OCI-LY7 (cell line): ENCODE measurements at regions of chr9 and their contacts with region 1.

Region 1: GRCh38 chr9:7053903-7054302 is 296.1 kb downstream of the KDM4C start:
- DNase-seq: no peak
- H3K4me3 ChIP-seq: no peak overlapping the region
- H3K27ac ChIP-seq: no peak overlapping the region
- H3K4me1 ChIP-seq: no peaks in the 10 kb centered on the region
- CTCF ChIP-seq: no peak

Region 2: GRCh38 chr9:6833518-6834192 is 220.2 kb before region 1 on chr9:
- CTCF ChIA-PET with region 1: no interaction called
- POLR2A ChIA-PET with region 1: no interaction called
- intact Hi-C with region 1: loop called (anchors 5 kb)
- DNase-seq: no peak
- H3K4me3 ChIP-seq: no peak overlapping the region
- H3K27ac ChIP-seq: no peak overlapping the region
- H3K4me1 ChIP-seq: no peaks in the 10 kb centered on the region
- CTCF ChIP-seq: no peak

Region 3: DNA sequence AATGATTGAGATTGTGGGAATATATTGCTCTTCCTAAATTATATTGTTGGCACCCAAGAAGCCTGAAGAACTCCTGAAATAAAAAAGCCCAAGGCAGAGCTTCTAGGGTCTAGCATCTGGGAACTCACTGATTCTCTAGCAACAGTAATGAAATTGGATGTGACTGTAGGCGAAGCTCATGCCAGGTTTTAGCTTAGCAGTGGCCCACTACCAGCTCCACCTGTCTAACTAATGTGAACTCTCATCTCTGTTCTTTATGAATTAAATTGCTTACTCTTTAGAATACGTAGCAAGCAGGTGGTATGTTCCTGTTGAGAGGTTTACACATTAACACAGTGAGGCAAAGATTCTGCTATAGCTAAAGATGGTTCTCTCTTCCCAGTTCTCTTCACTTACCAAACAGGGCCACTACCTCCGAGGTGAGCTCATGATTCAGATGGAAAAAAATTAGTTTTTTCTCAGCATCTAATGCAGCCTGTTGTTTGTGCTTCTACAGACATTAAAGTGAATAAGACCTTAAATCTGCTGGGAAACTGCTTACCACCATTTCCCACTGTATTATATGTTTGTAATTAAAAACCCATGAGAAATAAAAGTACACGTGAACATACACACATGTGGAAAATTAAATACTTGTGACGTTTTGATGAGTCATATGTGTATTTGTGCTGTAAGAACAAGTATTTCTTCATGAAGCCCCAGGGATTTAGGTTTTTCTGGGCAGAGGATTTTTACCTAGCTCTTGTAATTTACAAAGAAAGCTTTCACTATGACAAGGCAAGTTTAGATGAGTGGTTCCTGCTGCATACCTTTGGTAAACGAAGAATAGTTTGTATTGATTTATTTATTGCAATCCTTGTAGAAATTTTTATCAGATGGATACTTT is 64.0 kb after region 1 on chr9:
- CTCF ChIA-PET with region 1: no interaction called
- POLR2A ChIA-PET with region 1: no interaction called
- intact Hi-C with region 1: no loop called
- DNase-seq: no peak
- H3K4me3 ChIP-seq: no peak overlapping the region
- H3K27ac ChIP-seq: no peak overlapping the region
- H3K4me1 ChIP-seq: no peaks in the 10 kb centered on the region
- CTCF ChIP-seq: no peak